ENCODE measurements at regions of chr9 and their contacts with region 1.

Region 1: DNA sequence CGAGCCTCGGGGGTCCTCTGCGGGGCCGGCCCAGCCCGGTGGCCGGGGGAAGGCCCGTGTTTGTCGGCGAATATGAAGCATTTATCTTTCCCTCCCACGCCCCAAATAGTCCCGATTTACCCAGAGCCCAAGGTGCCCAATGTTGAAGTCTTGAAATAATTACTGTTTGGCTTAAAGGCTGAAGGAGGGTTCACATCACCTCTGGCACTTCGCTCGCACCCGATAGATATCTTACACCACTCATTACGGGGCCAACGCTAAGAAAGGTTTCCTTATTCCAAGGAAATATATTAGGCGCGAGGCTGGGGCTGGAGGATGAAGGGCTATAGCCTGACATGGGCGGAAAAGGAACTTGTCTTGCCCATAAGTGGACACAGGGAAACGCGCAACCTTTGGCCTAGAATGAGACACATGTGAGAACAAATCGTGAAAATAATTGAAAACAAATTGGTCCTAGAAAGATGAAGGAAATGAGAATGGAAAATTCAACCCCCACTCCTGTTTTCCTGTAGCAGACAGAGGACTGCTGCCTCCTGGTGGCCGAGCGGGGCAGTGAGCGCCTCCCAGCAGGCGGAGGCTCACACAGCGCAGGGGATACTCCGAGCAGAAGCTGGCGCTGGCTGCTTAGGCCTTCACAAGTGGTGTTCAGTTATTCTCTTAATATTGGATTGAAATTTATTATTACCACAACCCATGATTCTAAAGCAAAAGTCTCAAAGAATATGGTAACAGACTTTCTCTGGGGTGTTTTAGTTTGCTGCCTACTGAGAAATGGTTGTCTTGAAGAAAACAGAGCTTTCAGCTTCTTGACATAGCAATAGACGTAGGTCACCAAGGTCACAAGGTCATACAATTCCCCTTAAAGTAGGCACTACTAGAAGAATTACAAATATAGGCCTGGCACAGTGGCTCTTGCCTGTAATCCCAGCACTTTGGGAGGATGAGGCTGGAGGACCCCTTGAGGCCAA is 7.9 kb downstream of the CCL21 start:
- DNase-seq: peak; percentile 90
- H3K4me3 Mint-ChIP-seq: peak overlapping the region; percentile 69
- H3K27ac Mint-ChIP-seq: no peak overlapping the region
- H3K4me1 Mint-ChIP-seq: peaks cover 7% of the 10 kb centered on the region
- H3K27me3 Mint-ChIP-seq: peaks cover 5% of the 10 kb centered on the region

Region 2: GRCh38 chr9:34611829-34612630 is 90.0 kb before region 1 on chr9 and contains the start of gene RPP25L:
- CTCF ChIA-PET with region 1: interaction called, 5 read pairs
- intact Hi-C with region 1: loop called (anchors 1 kb)
- DNase-seq: peak; percentile 80
- H3K4me3 Mint-ChIP-seq: peak within 1 kb of the TSS; percentile 87
- H3K27ac Mint-ChIP-seq: peak within 1 kb of the TSS; percentile 83
- H3K4me1 Mint-ChIP-seq: peaks cover 21% of the 10 kb centered on the region
- H3K27me3 Mint-ChIP-seq: no peaks in the 10 kb centered on the region
- total RNA-seq, gene RPP25L: 25.7 to 27.0 TPM

Region 3: DNA sequence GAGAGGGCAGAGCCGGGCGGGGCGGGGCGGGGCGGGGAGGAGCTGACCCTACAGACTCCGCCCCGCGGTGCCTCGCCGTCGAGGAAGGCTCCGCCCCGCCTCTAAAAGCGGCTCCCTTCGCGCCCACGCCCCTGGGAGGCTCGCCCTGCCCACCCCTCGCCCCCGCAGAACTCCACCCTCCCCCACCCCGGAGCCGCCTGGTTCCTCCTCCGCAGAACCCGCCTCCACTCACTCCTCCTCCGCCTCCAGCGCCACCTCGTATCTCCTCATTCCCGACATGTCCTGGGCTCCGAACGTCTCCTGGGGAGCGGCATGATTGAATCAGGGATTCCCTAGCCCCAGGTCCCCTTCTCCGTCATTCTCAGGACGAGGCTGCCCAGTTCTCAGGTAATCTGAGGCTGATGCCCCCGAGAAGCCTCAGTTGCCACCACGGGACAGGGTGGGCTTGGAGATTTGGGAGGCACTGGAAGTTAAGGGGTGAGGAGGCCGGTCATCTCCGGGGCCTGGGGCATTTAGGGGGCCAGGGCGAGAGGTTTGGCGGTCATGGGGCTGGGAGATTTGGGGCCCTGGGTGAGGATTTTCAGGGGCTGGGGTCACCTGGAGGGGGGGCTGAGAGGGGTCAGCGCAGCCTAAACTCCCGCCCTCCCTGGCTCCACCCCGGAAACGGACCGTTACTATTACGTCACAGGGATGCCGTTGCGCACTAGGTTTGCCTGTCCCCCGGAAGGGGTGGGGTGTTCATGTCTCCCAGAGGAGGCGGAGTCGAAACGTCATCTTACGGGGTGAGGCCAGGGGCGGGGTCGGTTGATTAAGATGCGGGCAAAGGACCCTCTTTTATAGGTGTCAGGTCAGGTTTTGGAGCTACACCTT is 36.4 kb before region 1 on chr9:
- CTCF ChIA-PET with region 1: interaction called, 16 read pairs
- intact Hi-C with region 1: loop called (anchors 1 kb)
- DNase-seq: peak; percentile 93
- H3K4me3 Mint-ChIP-seq: peak overlapping the region; percentile 77
- H3K27ac Mint-ChIP-seq: peak overlapping the region; percentile 80
- H3K4me1 Mint-ChIP-seq: peaks cover 39% of the 10 kb centered on the region
- H3K27me3 Mint-ChIP-seq: no peaks in the 10 kb centered on the region

Region 4: DNA sequence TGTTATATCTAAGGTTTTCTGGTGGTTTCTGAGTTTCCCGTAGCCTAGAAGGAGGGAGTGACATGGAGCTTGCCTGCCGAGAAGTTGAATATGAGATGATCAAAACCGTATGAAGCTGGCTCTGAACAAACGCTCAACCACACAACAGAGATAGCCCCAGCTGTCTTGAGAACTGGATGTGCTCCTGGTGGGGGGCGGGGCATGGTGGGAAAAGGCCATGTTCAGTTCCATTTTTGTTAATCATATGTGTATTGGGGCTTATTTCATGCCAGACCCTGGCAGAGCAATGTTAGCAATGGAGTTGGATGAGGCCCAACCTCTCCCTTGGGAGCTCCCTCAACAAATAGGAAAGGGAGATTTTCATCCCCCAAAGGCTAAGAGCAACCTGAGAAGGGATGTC is 15.8 kb before region 1 on chr9:
- CTCF ChIA-PET with region 1: interaction called, 17 read pairs
- intact Hi-C with region 1: no loop called
- DNase-seq: no peak
- H3K4me3 Mint-ChIP-seq: no peak overlapping the region
- H3K27ac Mint-ChIP-seq: no peak overlapping the region
- H3K4me1 Mint-ChIP-seq: peaks cover 9% of the 10 kb centered on the region
- H3K27me3 Mint-ChIP-seq: no peaks in the 10 kb centered on the region

Region 5: DNA sequence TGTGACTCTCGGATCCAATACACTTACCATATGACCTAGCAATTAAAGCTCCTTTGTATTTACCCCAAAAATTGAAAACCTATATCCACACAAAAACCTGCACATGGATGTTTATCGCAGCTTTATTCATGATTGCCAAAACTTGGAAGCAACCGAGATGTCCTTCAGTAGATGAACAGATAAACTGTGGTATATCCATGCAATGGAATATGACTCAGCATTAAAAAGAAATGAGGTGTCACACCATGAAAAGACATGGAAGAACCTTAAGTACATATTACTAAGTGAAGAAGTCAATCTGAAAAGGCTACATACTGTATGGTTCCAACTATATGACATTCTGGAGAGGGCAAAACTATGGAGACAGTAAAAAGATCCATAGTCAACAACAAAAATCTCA is 174.0 kb after region 1 on chr9:
- CTCF ChIA-PET with region 1: no interaction called
- intact Hi-C with region 1: no loop called
- DNase-seq: no peak
- H3K4me3 Mint-ChIP-seq: no peak overlapping the region
- H3K27ac Mint-ChIP-seq: no peak overlapping the region
- H3K4me1 Mint-ChIP-seq: no peaks in the 10 kb centered on the region
- H3K27me3 Mint-ChIP-seq: peaks cover 8% of the 10 kb centered on the region

Measured in activated naive CD4-positive, alpha-beta T cell treated with anti-CD3 and anti-CD28 coated beads for 36 hours (primary cell).